Thyroid gland (tissue), 4 donors: ENCODE measurements at regions of chr16 and their contacts with region 1.

Region 1: GRCh38 chr16:58198022-58198683 is at the start of gene CSNK2A2:
- DNase-seq: peak; percentile 71 to 75
- H3K4me3 ChIP-seq: peak within 1 kb of the TSS; percentile 48 to 71 (median 52)
- H3K27ac ChIP-seq: peak within 1 kb of the TSS in 1 of 3 donors; percentile 58
- H3K4me1 ChIP-seq: peaks cover 14 to 16% of the 10 kb centered on the region in 2 donors
- H3K27me3 ChIP-seq: no peaks in the 10 kb centered on the region
- CTCF ChIP-seq: peak in 2 of 6 experiments; percentile 64 to 72
- POLR2A ChIP-seq: no peak
- total RNA-seq, gene CSNK2A2: 26.0 to 41.0 (median 33.9) TPM

Region 2: DNA sequence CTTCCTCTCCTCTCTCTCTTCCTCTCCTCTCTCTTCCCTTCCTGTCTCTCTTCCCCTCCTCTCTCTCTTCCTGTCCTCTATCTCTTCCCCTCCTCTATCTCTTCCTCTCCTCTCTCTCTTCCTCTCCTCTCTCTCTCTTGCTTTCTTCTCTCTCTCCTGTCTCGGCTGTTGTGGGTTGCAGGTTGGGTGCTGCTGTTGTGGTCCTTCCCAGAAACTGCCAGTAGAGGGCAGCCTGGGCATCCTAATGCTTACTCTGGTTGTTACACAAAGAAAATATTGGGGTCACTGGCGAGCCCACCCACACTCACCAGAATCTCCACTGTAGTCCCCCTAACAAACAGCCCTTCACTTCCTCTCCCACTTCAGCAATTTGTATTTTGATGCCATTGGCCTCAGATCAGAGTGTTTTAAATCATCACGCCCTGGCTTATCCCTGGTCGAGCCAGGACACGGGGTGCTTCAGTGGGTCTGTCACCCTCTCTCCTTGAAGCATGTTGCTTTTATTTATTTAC is 177.5 kb before region 1 on chr16:
- intact Hi-C with region 1: loop called (anchors 5 kb)
- DNase-seq: peak; percentile 75 to 76
- H3K4me3 ChIP-seq: no peak overlapping the region
- H3K27ac ChIP-seq: no peak overlapping the region
- H3K4me1 ChIP-seq: peaks cover 31 to 35% of the 10 kb centered on the region in 2 donors
- H3K27me3 ChIP-seq: no peaks in the 10 kb centered on the region
- CTCF ChIP-seq: peak; percentile 72 to 97 (median 86)
- POLR2A ChIP-seq: no peak

Region 3: GRCh38 chr16:58137581-58137980 is 60.6 kb before region 1 on chr16:
- intact Hi-C with region 1: loop called (anchors 10 kb)
- DNase-seq: no peak
- H3K4me3 ChIP-seq: no peak overlapping the region
- H3K27ac ChIP-seq: no peak overlapping the region
- H3K4me1 ChIP-seq: no peaks in the 10 kb centered on the region
- H3K27me3 ChIP-seq: no peaks in the 10 kb centered on the region
- CTCF ChIP-seq: no peak
- POLR2A ChIP-seq: no peak